AG04449 (cell line): ENCODE measurements at regions of chr11 and their contacts with region 1.

Region 1: GRCh38 chr11:74611369-74611861 is 19.0 kb downstream of the POLD3 start:
- DNase-seq: peak; percentile 64
- H3K4me3 ChIP-seq: no peak overlapping the region
- CTCF ChIP-seq: peak; percentile 38

Region 2: GRCh38 chr11:74627381-74627780 is 16.0 kb after region 1 on chr11:
- CTCF ChIA-PET with region 1: interaction called, 16 read pairs
- POLR2A ChIA-PET with region 1: no interaction called
- DNase-seq: no peak
- H3K4me3 ChIP-seq: no peak overlapping the region
- CTCF ChIP-seq: no peak

Region 3: GRCh38 chr11:74634537-74634936 is 23.1 kb after region 1 on chr11:
- CTCF ChIA-PET with region 1: interaction called, 16 read pairs
- POLR2A ChIA-PET with region 1: no interaction called
- DNase-seq: no peak
- H3K4me3 ChIP-seq: no peak overlapping the region
- CTCF ChIP-seq: peak; percentile 32